ENCODE measurements at regions of chr19 and their contacts with region 1.

Region 1: GRCh38 chr19:47243776-47244547 is 12.4 kb upstream of the CCDC9 start:
- DNase-seq: peak; percentile 95
- ATAC-seq: peak; percentile 71
- H3K4me3 Mint-ChIP-seq: peak overlapping the region; percentile 81
- H3K27ac Mint-ChIP-seq: peak overlapping the region; percentile 98
- H3K4me1 Mint-ChIP-seq: peaks cover 26% of the 10 kb centered on the region
- H3K27me3 Mint-ChIP-seq: no peaks in the 10 kb centered on the region
- CTCF ChIP-seq: peak; percentile 99

Region 2: DNA sequence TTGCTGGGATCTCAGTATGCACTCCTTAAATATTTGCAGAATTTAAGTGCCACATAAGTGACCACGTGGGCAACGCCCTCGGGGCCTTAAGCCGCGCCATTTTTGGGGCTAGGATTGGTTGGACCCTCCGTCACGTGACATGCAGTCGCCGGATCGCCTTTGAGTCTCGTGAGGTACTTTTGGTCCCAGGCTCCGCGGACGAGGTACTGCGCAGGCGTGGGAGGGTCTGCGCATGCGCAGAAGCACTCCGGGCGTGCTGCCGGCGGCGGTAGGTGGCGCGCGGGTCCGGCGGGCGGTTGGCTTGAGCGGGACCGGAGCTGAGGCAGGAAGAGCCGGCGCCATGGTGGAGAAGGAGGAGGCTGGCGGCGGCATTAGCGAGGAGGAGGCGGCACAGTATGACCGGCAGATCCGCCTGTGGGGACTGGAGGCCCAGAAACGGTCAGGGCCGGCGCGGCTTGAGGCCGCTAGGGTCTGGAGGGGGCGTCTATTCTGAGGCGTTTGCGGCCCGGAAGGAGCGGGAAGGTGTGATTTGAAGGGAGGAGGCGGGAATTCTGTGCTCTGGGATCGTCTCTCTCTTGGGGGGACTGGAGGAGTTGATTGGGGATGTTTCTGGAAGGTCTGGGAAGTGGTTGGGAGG is 113.3 kb before region 1 on chr19 and contains the start of gene SAE1:
- CTCF ChIA-PET with region 1: interaction called, 24 read pairs
- POLR2A ChIA-PET with region 1: interaction called, 8 read pairs
- intact Hi-C with region 1: no loop called
- DNase-seq: peak; percentile 93
- ATAC-seq: peak; percentile 91
- H3K4me3 Mint-ChIP-seq: peak within 1 kb of the TSS; percentile 100
- H3K27ac Mint-ChIP-seq: peak within 1 kb of the TSS; percentile 100
- H3K4me1 Mint-ChIP-seq: peaks cover 37% of the 10 kb centered on the region
- H3K27me3 Mint-ChIP-seq: peaks cover 2% of the 10 kb centered on the region
- CTCF ChIP-seq: peak; percentile 51
- total RNA-seq, gene SAE1: 125 to 127 TPM

Region 3: GRCh38 chr19:47157431-47158321 is 86.3 kb before region 1 on chr19:
- CTCF ChIA-PET with region 1: interaction called, 82 read pairs
- POLR2A ChIA-PET with region 1: interaction called, 16 read pairs
- intact Hi-C with region 1: loop called (anchors 10 kb)
- DNase-seq: peak; percentile 60
- ATAC-seq: peak; percentile 18
- H3K4me3 Mint-ChIP-seq: peak overlapping the region; percentile 40
- H3K27ac Mint-ChIP-seq: peak overlapping the region; percentile 86
- H3K4me1 Mint-ChIP-seq: peaks cover 65% of the 10 kb centered on the region
- H3K27me3 Mint-ChIP-seq: no peaks in the 10 kb centered on the region
- CTCF ChIP-seq: no peak

Region 4: GRCh38 chr19:47200530-47200929 is 43.4 kb before region 1 on chr19:
- CTCF ChIA-PET with region 1: interaction called, 21 read pairs
- POLR2A ChIA-PET with region 1: no interaction called
- intact Hi-C with region 1: no loop called
- DNase-seq: no peak
- ATAC-seq: no peak
- H3K4me3 Mint-ChIP-seq: no peak overlapping the region
- H3K27ac Mint-ChIP-seq: no peak overlapping the region
- H3K4me1 Mint-ChIP-seq: peaks cover 5% of the 10 kb centered on the region
- H3K27me3 Mint-ChIP-seq: no peaks in the 10 kb centered on the region
- CTCF ChIP-seq: no peak

Region 5: DNA sequence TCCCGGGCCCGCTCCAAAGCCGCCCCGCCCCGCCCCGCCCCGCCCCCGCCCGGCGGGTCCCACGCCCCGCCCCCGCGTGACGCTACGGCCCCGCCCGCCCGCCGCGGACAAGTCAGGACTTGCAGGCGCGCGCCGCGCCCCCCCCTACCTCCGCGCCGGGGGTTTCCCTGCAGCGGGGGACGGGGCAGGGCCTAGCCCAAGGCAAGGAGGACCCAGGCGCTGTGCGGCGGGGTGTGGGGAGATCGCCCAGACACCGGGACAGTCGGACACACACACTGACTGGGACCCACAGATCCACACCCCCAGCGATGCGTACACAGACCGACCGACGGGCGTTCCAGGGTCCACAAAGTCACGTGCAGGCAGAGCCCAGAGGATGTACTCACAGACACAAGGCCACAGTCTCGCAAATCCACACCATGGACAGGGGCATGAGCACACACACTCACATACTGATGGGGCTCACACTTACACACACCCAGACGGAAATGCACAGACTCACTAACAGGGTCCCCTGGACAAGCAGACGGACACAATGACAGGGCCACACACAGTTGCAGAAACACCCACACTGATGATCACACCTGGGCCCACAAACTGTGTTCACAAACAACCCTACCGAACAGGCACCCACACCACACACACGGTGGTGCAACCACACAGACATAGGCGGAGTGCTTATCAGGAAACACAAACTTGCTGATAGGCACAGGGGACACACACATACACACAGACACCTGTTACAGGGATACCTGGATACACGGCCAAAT is 12.6 kb before region 1 on chr19:
- CTCF ChIA-PET with region 1: interaction called, 68 read pairs
- POLR2A ChIA-PET with region 1: interaction called, 38 read pairs
- intact Hi-C with region 1: loop called (anchors 2 kb)
- DNase-seq: peak; percentile 93
- ATAC-seq: peak; percentile 59
- H3K4me3 Mint-ChIP-seq: peak overlapping the region; percentile 65
- H3K27ac Mint-ChIP-seq: peak overlapping the region; percentile 72
- H3K4me1 Mint-ChIP-seq: peaks cover 20% of the 10 kb centered on the region
- H3K27me3 Mint-ChIP-seq: no peaks in the 10 kb centered on the region
- CTCF ChIP-seq: no peak

Region 6: GRCh38 chr19:47273313-47273977 is 29.5 kb after region 1 on chr19:
- CTCF ChIA-PET with region 1: interaction called, 10 read pairs
- POLR2A ChIA-PET with region 1: interaction called, 4 read pairs
- intact Hi-C with region 1: no loop called
- DNase-seq: peak; percentile 93
- ATAC-seq: peak; percentile 69
- H3K4me3 Mint-ChIP-seq: peak overlapping the region; percentile 92
- H3K27ac Mint-ChIP-seq: peak overlapping the region; percentile 99
- H3K4me1 Mint-ChIP-seq: peaks cover 26% of the 10 kb centered on the region
- H3K27me3 Mint-ChIP-seq: no peaks in the 10 kb centered on the region
- CTCF ChIP-seq: no peak

Region 7: GRCh38 chr19:47391510-47392223 is 147.7 kb after region 1 on chr19:
- CTCF ChIA-PET with region 1: no interaction called
- POLR2A ChIA-PET with region 1: no interaction called
- intact Hi-C with region 1: no loop called
- DNase-seq: peak; percentile 88
- ATAC-seq: peak; percentile 93
- H3K4me3 Mint-ChIP-seq: no peak overlapping the region
- H3K27ac Mint-ChIP-seq: no peak overlapping the region
- H3K4me1 Mint-ChIP-seq: peaks cover 4% of the 10 kb centered on the region
- H3K27me3 Mint-ChIP-seq: peaks cover 7% of the 10 kb centered on the region
- CTCF ChIP-seq: peak; percentile 94